Activated naive CD4-positive, alpha-beta T cell treated with anti-CD3 and anti-CD28 coated beads for 36 hours (primary cell): ENCODE measurements at regions of chr18 and their contacts with region 1.

Region 1: DNA sequence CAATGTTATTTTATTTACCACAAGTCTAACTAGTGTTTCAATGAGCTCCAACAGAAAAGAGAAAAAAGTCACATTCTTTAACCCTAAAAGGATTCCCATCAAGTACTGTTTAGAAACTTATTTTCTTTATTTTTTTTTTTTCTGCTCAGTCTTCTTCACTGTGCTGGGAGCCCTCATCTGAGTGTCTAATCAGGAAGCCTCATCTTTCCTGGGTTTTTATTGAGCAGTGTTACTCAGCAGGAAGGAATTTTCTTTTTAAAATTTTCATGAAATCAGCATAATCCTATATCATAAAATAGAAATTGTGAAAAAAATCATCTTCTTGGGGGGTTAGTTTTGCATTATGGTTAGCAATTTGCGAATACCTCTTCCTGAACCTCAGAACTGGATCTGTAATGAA is 453.8 kb downstream of the CDH2 start:
- DNase-seq: no peak
- H3K4me3 Mint-ChIP-seq: no peak overlapping the region
- H3K27ac Mint-ChIP-seq: no peak overlapping the region
- H3K4me1 Mint-ChIP-seq: no peaks in the 10 kb centered on the region
- H3K27me3 Mint-ChIP-seq: no peaks in the 10 kb centered on the region

Region 2: DNA sequence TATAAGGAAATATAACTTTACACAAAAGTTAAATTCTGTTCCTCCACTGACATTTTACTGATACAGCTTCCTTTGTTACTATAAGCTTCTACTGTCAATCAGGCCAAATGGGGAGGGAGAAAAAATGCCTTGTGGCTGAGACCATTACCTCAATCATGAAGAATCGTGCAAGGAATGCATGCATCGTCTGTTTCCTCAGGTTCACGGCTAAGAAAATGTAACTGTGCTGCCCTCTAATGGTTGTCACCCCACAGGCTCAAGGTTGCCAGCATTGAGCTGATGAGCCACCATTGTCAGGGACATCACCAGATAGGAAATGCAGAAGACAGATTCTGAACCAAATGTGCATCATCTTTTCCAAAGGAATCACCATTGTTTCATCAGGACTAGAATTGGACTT is 26.8 kb after region 1 on chr18:
- CTCF ChIA-PET with region 1: no interaction called
- intact Hi-C with region 1: loop called (anchors 1 kb)
- DNase-seq: peak; percentile 8
- H3K4me3 Mint-ChIP-seq: no peak overlapping the region
- H3K27ac Mint-ChIP-seq: no peak overlapping the region
- H3K4me1 Mint-ChIP-seq: no peaks in the 10 kb centered on the region
- H3K27me3 Mint-ChIP-seq: no peaks in the 10 kb centered on the region